Right ventricle myocardium inferior (tissue), 1 donor: ENCODE measurements at regions of chrX and their contacts with region 1.

Region 1: DNA sequence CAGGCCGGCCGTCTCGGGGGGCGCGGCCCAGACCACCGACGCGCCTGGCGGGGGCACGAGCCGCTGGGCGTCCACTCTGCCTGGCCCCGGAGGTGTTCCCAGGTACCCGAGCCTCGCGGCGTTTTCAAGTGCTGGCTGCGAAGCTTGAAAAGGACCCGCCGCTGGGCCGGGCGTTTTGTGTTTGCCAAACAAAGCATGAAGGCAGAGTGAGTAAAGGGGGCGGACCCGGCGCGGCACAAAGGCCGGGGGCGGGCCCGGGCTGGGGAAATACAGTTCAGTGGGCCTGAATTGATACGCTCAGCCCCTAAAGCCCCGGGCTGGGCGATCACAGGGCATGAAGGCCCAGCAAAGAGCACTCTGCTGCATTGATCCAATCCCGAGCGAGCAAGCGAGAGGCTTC is 65.4 kb downstream of the SOX3 start:
- DNase-seq: no peak
- ATAC-seq: no peak

Region 2: GRCh38 chrX:140389331-140389730 is 50.1 kb before region 1 on chrX:
- intact Hi-C with region 1: no loop called
- DNase-seq: no peak
- ATAC-seq: no peak

Region 3: GRCh38 chrX:140492066-140493006 is 52.9 kb after region 1 on chrX:
- intact Hi-C with region 1: loop called (anchors 10 kb)
- DNase-seq: no peak
- ATAC-seq: peak; percentile 78